ENCODE measurements at regions of chr12 and their contacts with region 1.

Region 1: DNA sequence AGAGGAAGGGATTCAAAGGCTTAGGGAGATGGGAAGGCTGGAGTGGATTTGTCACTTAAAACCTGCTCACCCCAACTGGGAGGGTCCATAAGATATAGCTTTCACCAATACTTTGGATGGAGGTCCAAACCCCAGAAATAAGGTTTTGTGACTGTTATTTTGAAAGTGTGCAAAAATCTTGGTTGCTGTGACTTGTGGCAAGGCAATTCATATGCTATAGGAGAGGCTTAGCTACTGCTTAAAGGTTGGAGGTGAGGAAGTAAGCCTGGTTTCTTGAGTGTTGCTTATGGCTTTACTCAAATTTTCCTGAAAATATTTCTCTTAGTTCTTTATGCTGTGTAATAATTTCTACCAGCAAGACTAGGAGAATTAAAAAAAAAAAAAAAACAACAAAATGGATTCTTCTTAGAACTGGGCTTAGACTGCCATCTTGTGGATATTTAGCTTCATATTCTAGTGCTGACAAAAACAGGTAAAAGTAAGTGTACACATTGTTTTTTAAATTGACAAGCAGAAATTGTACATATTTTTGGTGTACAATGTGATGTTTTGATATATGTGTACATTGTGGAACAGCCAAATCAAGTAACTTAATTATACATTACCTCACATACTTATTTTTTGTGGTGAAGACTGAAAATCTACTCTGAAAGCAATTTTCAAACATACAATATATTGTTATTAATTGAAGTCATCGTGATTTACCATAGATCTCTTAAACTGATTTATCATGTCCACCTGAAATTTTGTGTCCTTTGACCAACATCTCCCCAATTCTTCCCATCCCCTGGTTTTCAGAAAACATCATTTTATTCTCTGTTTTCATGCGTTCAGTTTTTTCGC is 23.0 kb downstream of the PDE6H start:
- DNase-seq: peak; percentile 81
- H3K4me3 ChIP-seq: no peak overlapping the region
- H3K27ac ChIP-seq: no peak overlapping the region
- H3K4me1 ChIP-seq: no peaks in the 10 kb centered on the region
- H3K27me3 ChIP-seq: peaks cover 0 to 1% of the 10 kb centered on the region in 2 experiments
- CTCF ChIP-seq: peak; percentile 18 to 34
- POLR2A ChIP-seq: no peak

Region 2: GRCh38 chr12:14629832-14630710 is 365.7 kb before region 1 on chr12:
- CTCF ChIA-PET with region 1: interaction called, 4 read pairs
- POLR2A ChIA-PET with region 1: no interaction called
- dilution Hi-C with region 1: no loop called
- intact Hi-C with region 1: loop called (anchors 5 kb)
- DNase-seq: peak; percentile 70
- H3K4me3 ChIP-seq: no peak overlapping the region
- H3K27ac ChIP-seq: no peak overlapping the region
- H3K4me1 ChIP-seq: no peaks in the 10 kb centered on the region
- H3K27me3 ChIP-seq: peaks cover 2 to 6% of the 10 kb centered on the region in 2 experiments
- CTCF ChIP-seq: peak; percentile 86 to 91
- POLR2A ChIP-seq: no peak

Region 3: DNA sequence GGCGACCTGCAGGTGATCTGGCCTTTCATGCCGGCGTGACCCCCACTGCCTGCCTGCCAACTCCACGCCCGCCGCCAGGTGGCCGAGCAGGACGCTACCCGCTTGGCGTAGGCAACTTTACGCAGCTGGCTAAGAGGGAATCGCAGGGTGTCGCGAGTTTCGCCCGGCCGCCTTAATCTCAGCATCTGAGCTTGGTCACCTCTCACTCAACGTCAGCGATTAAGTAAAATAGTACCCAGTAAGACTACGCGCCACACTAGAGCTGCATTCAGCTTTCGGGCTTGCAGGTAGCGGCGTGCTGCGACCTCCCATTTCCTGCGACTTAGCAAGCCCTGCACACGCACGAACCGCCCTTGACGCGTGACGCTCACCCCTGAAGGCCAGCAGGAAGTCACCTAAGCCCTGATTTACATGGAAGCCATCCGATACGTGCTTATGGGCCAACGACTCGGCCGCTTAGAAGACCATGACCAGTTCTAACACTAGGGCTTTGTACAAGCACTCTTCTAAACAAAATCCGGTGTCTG is 225.8 kb before region 1 on chr12:
- CTCF ChIA-PET with region 1: interaction called, 22 read pairs
- POLR2A ChIA-PET with region 1: no interaction called
- dilution Hi-C with region 1: no loop called
- intact Hi-C with region 1: loop called (anchors 2 kb)
- DNase-seq: peak; percentile 77
- H3K4me3 ChIP-seq: peak overlapping the region; percentile 22 to 82 (median 70)
- H3K27ac ChIP-seq: peak overlapping the region; percentile 91
- H3K4me1 ChIP-seq: peaks cover 7% of the 10 kb centered on the region
- H3K27me3 ChIP-seq: no peaks in the 10 kb centered on the region
- CTCF ChIP-seq: peak; percentile 73 to 87
- POLR2A ChIP-seq: peak; percentile 25

Region 4: GRCh38 chr12:14810953-14811483 is 184.8 kb before region 1 on chr12:
- CTCF ChIA-PET with region 1: interaction called, 147 read pairs
- POLR2A ChIA-PET with region 1: no interaction called
- dilution Hi-C with region 1: no loop called
- intact Hi-C with region 1: loop called (anchors 1 kb)
- DNase-seq: peak; percentile 54
- H3K4me3 ChIP-seq: no peak overlapping the region
- H3K27ac ChIP-seq: no peak overlapping the region
- H3K4me1 ChIP-seq: no peaks in the 10 kb centered on the region
- H3K27me3 ChIP-seq: no peaks in the 10 kb centered on the region
- CTCF ChIP-seq: peak; percentile 57 to 61
- POLR2A ChIP-seq: no peak

Region 5: DNA sequence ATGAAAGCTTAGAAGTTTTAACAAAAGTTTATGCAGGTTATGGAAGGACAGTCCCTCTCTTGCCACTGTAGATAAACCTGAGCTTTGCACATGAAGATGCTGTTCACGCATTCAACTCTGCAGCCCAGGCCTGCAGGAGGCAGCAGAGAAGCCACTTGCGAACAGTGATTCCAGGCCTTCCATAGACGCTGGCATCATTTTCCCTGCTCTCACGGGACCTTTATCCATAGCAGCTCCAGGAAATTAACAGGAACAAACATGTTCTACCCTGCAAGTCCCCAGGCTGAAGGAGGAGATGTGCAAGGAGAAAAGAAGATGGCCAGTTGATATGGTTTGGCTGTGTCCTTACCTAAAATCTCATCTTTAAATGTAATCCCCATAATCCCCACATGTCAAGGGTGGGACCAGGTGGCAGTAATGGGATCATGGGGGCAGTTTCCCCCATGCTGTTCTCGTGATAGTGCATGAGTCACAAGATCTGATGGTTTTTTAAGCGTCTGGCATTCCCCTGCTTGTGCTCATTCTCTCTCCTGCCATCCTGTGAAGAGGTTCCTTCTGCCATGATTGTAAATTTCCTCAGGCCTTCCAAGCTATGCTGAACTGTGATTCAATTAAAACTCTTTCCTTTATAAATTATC is 59.5 kb before region 1 on chr12:
- CTCF ChIA-PET with region 1: interaction called, 8 read pairs
- POLR2A ChIA-PET with region 1: no interaction called
- dilution Hi-C with region 1: no loop called
- intact Hi-C with region 1: loop called (anchors 1 kb)
- DNase-seq: no peak
- H3K4me3 ChIP-seq: no peak overlapping the region
- H3K27ac ChIP-seq: no peak overlapping the region
- H3K4me1 ChIP-seq: peaks cover 6% of the 10 kb centered on the region
- H3K27me3 ChIP-seq: no peaks in the 10 kb centered on the region
- CTCF ChIP-seq: peak; percentile 13
- POLR2A ChIP-seq: no peak

Region 6: GRCh38 chr12:14960548-14961465 is 35.0 kb before region 1 on chr12:
- CTCF ChIA-PET with region 1: interaction called, 4 read pairs
- POLR2A ChIA-PET with region 1: no interaction called
- dilution Hi-C with region 1: no loop called
- intact Hi-C with region 1: loop called (anchors 2 kb)
- DNase-seq: peak; percentile 83
- H3K4me3 ChIP-seq: peak overlapping the region; percentile 57 to 78 (median 64)
- H3K27ac ChIP-seq: peak overlapping the region; percentile 80
- H3K4me1 ChIP-seq: peaks cover 52% of the 10 kb centered on the region
- H3K27me3 ChIP-seq: no peaks in the 10 kb centered on the region
- CTCF ChIP-seq: no peak
- POLR2A ChIP-seq: no peak